ENCODE measurements at regions of chr20 and their contacts with region 1.

Region 1: GRCh38 chr20:21505161-21505809 is 8.6 kb downstream of the NKX2-2 start:
- DNase-seq: peak; percentile 85
- H3K4me3 Mint-ChIP-seq: peak overlapping the region; percentile 57
- H3K27ac Mint-ChIP-seq: no peak overlapping the region
- H3K4me1 Mint-ChIP-seq: peaks cover 32% of the 10 kb centered on the region
- H3K27me3 Mint-ChIP-seq: peaks cover 49% of the 10 kb centered on the region

Region 2: DNA sequence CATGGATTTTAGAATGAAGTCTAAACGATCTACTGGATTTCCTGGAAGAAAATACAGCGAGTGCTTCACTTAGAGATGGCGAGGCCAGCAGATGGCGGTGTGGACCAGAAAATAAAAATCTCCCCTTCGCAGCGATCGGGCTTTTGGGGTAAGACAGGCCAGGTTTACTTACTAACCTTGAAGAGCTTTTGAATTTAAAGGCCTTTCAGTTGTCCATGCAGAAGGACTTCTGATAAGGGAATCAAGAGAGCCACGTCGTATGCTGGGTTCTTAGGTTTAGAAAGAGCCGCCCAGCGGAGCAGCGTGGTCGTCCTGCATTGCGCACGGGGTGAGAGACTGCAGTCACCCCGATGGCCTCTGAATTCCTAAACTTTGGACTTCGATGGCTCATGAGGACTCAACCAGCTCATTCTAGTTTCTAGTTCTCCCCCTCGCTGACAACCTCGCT is 667.7 kb before region 1 on chr20:
- CTCF ChIA-PET with region 1: interaction called, 22 read pairs
- POLR2A ChIA-PET with region 1: no interaction called
- intact Hi-C with region 1: loop called (anchors 10 kb)
- DNase-seq: peak; percentile 58
- H3K4me3 Mint-ChIP-seq: no peak overlapping the region
- H3K27ac Mint-ChIP-seq: no peak overlapping the region
- H3K4me1 Mint-ChIP-seq: no peaks in the 10 kb centered on the region
- H3K27me3 Mint-ChIP-seq: peaks cover 10% of the 10 kb centered on the region

Region 3: DNA sequence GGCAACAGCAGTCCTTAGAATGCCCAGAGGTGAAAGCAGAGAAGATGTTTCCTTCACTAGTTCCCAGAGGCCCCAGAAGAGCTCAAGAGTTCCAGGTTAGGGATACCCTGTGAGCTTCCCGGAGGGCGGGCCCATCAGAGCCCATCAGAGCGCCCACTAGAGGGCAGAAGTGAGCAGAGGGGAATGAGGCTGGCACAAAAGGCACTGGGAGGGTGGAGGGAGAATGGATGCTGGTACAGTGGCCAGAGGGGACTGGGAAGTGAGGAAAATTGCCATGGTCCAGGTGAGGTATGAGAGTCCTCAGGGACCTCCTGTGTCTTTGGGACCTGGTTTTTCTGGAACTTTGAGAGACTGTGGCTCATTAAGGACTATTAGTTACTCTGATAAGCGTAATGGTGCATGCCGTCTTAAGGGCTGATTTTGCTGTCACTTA is 456.4 kb before region 1 on chr20:
- CTCF ChIA-PET with region 1: interaction called, 22 read pairs
- POLR2A ChIA-PET with region 1: no interaction called
- intact Hi-C with region 1: no loop called
- DNase-seq: peak; percentile 60
- H3K4me3 Mint-ChIP-seq: no peak overlapping the region
- H3K27ac Mint-ChIP-seq: no peak overlapping the region
- H3K4me1 Mint-ChIP-seq: no peaks in the 10 kb centered on the region
- H3K27me3 Mint-ChIP-seq: peaks cover 15% of the 10 kb centered on the region

Region 4: GRCh38 chr20:21303061-21303871 is 202.0 kb before region 1 on chr20 and contains the start of gene XRN2:
- CTCF ChIA-PET with region 1: interaction called, 7 read pairs
- POLR2A ChIA-PET with region 1: no interaction called
- intact Hi-C with region 1: loop called (anchors 2 kb)
- DNase-seq: peak; percentile 97
- H3K4me3 Mint-ChIP-seq: peak within 1 kb of the TSS; percentile 93
- H3K27ac Mint-ChIP-seq: peak within 1 kb of the TSS; percentile 99
- H3K4me1 Mint-ChIP-seq: peaks cover 34% of the 10 kb centered on the region
- H3K27me3 Mint-ChIP-seq: no peaks in the 10 kb centered on the region
- total RNA-seq, gene XRN2: 91.0 to 94.4 TPM

Region 5: DNA sequence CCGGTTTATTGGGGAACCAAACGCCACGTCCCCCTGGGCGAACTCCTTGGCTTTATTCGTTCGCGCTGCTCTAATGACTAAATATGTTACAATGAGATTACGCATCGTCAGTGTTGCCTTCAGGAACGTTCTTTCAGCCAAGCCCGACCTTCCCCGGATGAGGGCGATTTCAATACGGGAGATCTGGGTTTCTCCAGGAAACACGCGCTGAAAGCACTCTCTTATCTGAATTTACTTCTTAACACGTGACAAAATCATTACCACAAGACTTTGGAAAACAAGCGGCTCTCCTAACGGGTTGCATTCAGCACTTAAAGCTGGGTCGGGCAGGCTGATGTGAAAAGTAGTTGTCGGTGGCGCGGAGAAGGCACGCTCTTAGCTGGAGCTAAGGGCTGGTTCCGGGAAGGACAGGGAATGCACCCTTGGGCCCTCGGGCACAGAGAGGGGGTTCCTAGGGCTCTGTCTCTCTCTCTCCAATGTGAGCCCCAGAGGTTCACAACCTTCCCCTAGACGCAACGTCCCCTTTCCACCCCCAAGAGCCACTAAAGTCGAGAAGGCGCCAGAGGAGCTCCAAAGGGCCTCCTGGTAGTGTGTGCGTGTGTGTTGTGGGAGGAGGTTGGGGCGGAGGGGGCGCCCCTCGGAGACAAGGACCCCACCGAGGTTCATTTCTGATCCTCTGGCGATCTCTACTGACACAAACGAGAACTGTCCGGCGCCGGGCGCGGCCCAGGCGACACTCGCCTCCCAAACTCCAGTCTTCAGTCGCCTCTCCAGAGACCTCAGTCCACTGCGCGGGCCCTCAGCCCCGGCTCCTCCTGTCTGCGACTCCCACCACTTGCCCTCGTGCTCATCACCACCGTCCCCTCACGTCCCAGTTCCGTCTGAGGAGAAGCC is 15.7 kb after region 1 on chr20:
- CTCF ChIA-PET with region 1: interaction called, 19 read pairs
- POLR2A ChIA-PET with region 1: no interaction called
- intact Hi-C with region 1: loop called (anchors 1 kb)
- DNase-seq: no peak
- H3K4me3 Mint-ChIP-seq: peak overlapping the region; percentile 31
- H3K27ac Mint-ChIP-seq: peak overlapping the region; percentile 10
- H3K4me1 Mint-ChIP-seq: peaks cover 33% of the 10 kb centered on the region
- H3K27me3 Mint-ChIP-seq: peaks cover 84% of the 10 kb centered on the region

Region 6: GRCh38 chr20:21571841-21572690 is 66.8 kb after region 1 on chr20:
- CTCF ChIA-PET with region 1: interaction called, 21 read pairs
- POLR2A ChIA-PET with region 1: no interaction called
- intact Hi-C with region 1: loop called (anchors 5 kb)
- DNase-seq: peak; percentile 27
- H3K4me3 Mint-ChIP-seq: no peak overlapping the region
- H3K27ac Mint-ChIP-seq: no peak overlapping the region
- H3K4me1 Mint-ChIP-seq: peaks cover 11% of the 10 kb centered on the region
- H3K27me3 Mint-ChIP-seq: peaks cover 11% of the 10 kb centered on the region

Measured in activated CD4-positive, alpha-beta memory T cell treated with anti-CD3 and anti-CD28 coated beads for 36 hours (primary cell).